Activated CD4-positive, alpha-beta T cell treated with anti-CD3 and anti-CD28 coated beads, Interleukin-2, amount 10 ng/mL, durations not matched to agents 24 days and 14 days (primary cell): ENCODE measurements at regions of chr10 and their contacts with region 1.

Region 1: GRCh38 chr10:72692057-72692910 is at the start of gene MCU:
- DNase-seq: peak; percentile 98
- H3K4me3 Mint-ChIP-seq: peak within 1 kb of the TSS; percentile 88
- H3K27ac Mint-ChIP-seq: peak within 1 kb of the TSS; percentile 54
- H3K4me1 Mint-ChIP-seq: peaks cover 29% of the 10 kb centered on the region
- H3K27me3 Mint-ChIP-seq: peaks cover 8% of the 10 kb centered on the region
- total RNA-seq, gene MCU: 13.5 and 15.9 TPM in 2 replicates

Region 2: DNA sequence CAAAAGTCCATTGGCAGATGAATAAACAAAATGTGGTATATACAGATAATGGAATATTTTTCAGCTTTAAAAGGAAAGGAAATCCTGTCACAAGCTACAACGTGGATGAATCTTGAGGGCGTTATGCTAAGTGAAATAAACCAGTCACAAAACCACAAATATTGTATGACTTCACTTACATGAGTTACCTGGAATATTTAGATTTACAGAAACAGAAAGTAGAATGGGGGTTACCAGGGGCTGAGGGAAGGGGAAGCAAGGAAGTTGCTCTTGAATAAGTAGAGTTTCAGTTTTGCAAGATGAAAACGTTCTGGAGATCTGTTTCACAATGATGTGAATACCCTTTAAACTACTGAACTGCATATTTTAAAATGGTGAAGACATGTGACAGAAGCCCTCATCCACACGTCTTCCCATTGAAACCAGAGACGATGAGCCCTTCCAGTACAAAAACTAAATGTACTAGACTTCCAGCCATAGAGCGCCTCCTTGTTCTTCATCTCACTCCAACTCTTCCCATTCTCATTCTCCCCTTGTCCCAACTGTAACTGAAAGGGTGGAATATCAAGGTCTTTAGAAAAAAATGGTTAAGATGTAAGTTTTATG is 128.9 kb before region 1 on chr10:
- intact Hi-C with region 1: loop called (anchors 2 kb)
- DNase-seq: peak; percentile 79
- H3K4me3 Mint-ChIP-seq: peak overlapping the region; percentile 75
- H3K27ac Mint-ChIP-seq: peak overlapping the region; percentile 96
- H3K4me1 Mint-ChIP-seq: peaks cover 41% of the 10 kb centered on the region
- H3K27me3 Mint-ChIP-seq: no peaks in the 10 kb centered on the region

Region 3: GRCh38 chr10:72712136-72712535 is 19.9 kb after region 1 on chr10:
- intact Hi-C with region 1: no loop called
- DNase-seq: no peak
- H3K4me3 Mint-ChIP-seq: no peak overlapping the region
- H3K27ac Mint-ChIP-seq: no peak overlapping the region
- H3K4me1 Mint-ChIP-seq: no peaks in the 10 kb centered on the region
- H3K27me3 Mint-ChIP-seq: no peaks in the 10 kb centered on the region

Region 4: DNA sequence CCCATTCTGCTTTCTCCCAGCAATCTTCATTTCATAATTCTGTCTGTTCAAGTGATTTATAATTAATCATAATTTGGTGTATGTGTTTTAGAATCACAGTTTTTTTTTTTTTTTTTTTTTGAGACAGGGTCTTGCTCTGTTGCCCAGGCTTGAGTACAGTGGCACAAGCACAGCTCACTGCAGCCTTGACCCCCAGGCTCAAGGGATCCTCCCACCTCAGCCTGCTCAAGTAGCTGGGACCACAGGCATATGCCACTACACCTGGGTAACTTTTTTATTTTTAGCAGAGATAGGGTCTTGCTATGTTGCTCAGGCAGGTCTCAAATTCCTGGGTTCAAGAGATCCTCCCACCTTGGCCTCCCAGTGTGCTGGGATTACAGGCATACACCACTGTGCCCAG is 311.5 kb after region 1 on chr10:
- intact Hi-C with region 1: no loop called
- DNase-seq: no peak
- H3K4me3 Mint-ChIP-seq: no peak overlapping the region
- H3K27ac Mint-ChIP-seq: no peak overlapping the region
- H3K4me1 Mint-ChIP-seq: no peaks in the 10 kb centered on the region
- H3K27me3 Mint-ChIP-seq: no peaks in the 10 kb centered on the region

Region 5: DNA sequence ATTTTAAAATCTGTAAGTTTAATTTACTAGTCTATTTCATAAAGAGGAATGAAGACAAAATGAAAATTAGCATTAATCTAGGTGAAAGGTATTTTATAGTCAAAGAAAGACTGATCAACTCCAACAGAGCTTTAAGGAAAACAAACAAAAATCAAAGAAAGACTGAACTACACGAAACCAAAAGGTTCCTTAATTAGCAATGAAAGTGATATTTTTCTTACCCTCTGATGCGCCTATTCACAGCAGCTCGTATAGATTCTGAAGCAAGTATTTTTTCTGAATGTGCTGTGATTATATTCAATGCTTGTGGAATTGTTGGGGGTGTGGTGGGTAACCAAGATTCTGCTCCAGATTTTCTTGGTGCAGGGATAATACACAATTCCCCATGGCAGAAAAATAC is 463.8 kb after region 1 on chr10:
- intact Hi-C with region 1: no loop called
- DNase-seq: no peak
- H3K4me3 Mint-ChIP-seq: no peak overlapping the region
- H3K27ac Mint-ChIP-seq: no peak overlapping the region
- H3K4me1 Mint-ChIP-seq: peaks cover 11% of the 10 kb centered on the region
- H3K27me3 Mint-ChIP-seq: no peaks in the 10 kb centered on the region

Region 6: DNA sequence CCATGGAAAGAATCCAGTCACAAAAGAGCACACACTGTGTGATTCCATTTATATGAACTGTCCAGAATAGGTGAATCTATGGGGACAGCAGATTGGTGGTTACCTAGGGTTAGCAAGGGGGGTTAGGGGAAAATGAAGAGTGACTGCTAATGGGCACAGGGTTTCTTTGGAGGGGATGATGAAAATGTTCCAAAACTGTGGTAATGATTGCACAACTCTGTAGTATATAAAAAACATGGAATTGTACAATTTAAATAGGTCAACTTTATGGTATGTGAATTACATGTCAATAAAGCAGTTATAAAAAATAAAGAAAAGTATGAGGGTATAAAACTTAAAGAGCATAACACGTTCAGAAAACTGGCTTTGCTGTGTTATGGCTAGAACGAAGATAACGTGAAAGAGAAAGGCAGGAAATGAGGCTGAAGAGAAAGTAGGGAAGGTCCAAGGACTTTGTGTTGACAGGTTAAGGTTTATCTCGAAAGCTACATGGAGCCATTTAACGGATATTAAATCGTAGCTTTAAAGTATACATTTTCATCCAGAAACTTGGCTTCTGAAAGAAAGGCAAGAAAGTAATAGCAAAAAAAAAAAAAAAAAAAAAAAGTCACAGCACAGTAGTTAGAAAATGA is 767.5 kb after region 1 on chr10:
- intact Hi-C with region 1: no loop called
- DNase-seq: no peak
- H3K4me3 Mint-ChIP-seq: no peak overlapping the region
- H3K27ac Mint-ChIP-seq: no peak overlapping the region
- H3K4me1 Mint-ChIP-seq: no peaks in the 10 kb centered on the region
- H3K27me3 Mint-ChIP-seq: no peaks in the 10 kb centered on the region